CD8-positive, alpha-beta T cell (primary cell): ENCODE measurements at regions of chr2 and their contacts with region 1.

Region 1: GRCh38 chr2:118882709-118883210 is 35.3 kb upstream of the EN1 start:
- DNase-seq: peak; percentile 40 to 84 (median 59)
- ATAC-seq: peak; percentile 81
- H3K4me3 ChIP-seq: peak overlapping the region; percentile 16 to 36
- H3K4me3 Mint-ChIP-seq: peak overlapping the region; percentile 75
- H3K27ac ChIP-seq: no peak overlapping the region
- H3K27ac Mint-ChIP-seq: peak overlapping the region; percentile 58
- H3K4me1 ChIP-seq: peaks cover 15% of the 10 kb centered on the region
- H3K4me1 Mint-ChIP-seq: peaks cover 22% of the 10 kb centered on the region
- H3K27me3 ChIP-seq: no peaks in the 10 kb centered on the region
- H3K27me3 Mint-ChIP-seq: peaks cover 5% of the 10 kb centered on the region
- CTCF ChIP-seq: peak; percentile 72

Region 2: GRCh38 chr2:118696786-118697465 is 185.8 kb before region 1 on chr2:
- CTCF ChIA-PET with region 1: no interaction called
- POLR2A ChIA-PET with region 1: no interaction called
- intact Hi-C with region 1: no loop called
- DNase-seq: no peak
- ATAC-seq: no peak
- H3K4me3 ChIP-seq: no peak overlapping the region
- H3K4me3 Mint-ChIP-seq: no peak overlapping the region
- H3K27ac ChIP-seq: no peak overlapping the region
- H3K27ac Mint-ChIP-seq: no peak overlapping the region
- H3K4me1 ChIP-seq: no peaks in the 10 kb centered on the region
- H3K4me1 Mint-ChIP-seq: no peaks in the 10 kb centered on the region
- H3K27me3 ChIP-seq: no peaks in the 10 kb centered on the region
- H3K27me3 Mint-ChIP-seq: peaks cover 3% of the 10 kb centered on the region
- CTCF ChIP-seq: no peak

Region 3: DNA sequence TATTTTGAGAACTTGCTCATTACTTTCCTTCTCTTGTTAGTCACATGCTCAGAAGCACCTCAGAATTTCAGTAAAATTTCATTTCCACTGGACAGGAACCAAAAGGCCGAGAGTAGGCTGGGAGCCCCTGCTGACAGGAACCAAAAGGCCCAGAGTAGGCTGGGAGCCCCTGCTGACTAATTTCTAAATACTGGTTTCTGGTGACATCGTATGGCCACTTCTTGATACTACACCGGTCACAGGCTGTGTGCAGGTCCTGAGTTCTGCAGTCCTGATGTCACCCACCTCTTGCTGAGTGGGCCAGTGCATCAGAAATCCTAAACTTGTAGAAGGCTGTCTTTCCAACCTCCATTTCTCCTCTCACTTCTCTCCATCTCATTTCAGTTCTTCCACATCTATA is 17.7 kb before region 1 on chr2:
- CTCF ChIA-PET with region 1: interaction called, 22 read pairs
- POLR2A ChIA-PET with region 1: no interaction called
- intact Hi-C with region 1: no loop called
- DNase-seq: peak in 2 of 9 experiments; percentile 45 to 55
- ATAC-seq: peak; percentile 55
- H3K4me3 ChIP-seq: no peak overlapping the region
- H3K4me3 Mint-ChIP-seq: no peak overlapping the region
- H3K27ac ChIP-seq: no peak overlapping the region
- H3K27ac Mint-ChIP-seq: no peak overlapping the region
- H3K4me1 ChIP-seq: no peaks in the 10 kb centered on the region
- H3K4me1 Mint-ChIP-seq: no peaks in the 10 kb centered on the region
- H3K27me3 ChIP-seq: peaks cover 0 to under 1% of the 10 kb centered on the region in 2 experiments
- H3K27me3 Mint-ChIP-seq: peaks cover 34% of the 10 kb centered on the region
- CTCF ChIP-seq: peak; percentile 31

Region 4: DNA sequence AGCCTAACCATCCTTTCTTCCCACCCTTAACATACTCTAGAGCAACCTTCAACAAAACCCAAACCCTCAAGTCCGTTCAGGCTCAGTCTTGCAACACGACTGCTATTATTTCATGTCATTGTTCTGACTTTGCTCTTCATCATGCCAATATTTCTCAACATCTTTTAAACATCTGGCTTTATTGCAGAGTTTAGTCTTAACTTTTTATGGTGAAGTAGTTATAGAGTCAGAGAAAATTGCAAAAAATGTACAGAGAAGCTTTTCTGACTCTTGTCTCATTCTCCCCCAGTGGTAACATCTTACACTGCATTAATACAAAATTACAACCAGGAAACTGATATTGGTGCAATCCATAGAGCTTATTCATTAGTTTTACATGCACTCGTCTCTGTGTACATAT is 63.1 kb after region 1 on chr2:
- CTCF ChIA-PET with region 1: interaction called, 10 read pairs
- POLR2A ChIA-PET with region 1: no interaction called
- intact Hi-C with region 1: loop called in 1 of 2 experiments (anchors 2 kb)
- DNase-seq: no peak
- ATAC-seq: no peak
- H3K4me3 ChIP-seq: no peak overlapping the region
- H3K4me3 Mint-ChIP-seq: no peak overlapping the region
- H3K27ac ChIP-seq: no peak overlapping the region
- H3K27ac Mint-ChIP-seq: no peak overlapping the region
- H3K4me1 ChIP-seq: no peaks in the 10 kb centered on the region
- H3K4me1 Mint-ChIP-seq: peaks cover 1% of the 10 kb centered on the region
- H3K27me3 ChIP-seq: no peaks in the 10 kb centered on the region
- H3K27me3 Mint-ChIP-seq: peaks cover 11% of the 10 kb centered on the region
- CTCF ChIP-seq: no peak

Region 5: DNA sequence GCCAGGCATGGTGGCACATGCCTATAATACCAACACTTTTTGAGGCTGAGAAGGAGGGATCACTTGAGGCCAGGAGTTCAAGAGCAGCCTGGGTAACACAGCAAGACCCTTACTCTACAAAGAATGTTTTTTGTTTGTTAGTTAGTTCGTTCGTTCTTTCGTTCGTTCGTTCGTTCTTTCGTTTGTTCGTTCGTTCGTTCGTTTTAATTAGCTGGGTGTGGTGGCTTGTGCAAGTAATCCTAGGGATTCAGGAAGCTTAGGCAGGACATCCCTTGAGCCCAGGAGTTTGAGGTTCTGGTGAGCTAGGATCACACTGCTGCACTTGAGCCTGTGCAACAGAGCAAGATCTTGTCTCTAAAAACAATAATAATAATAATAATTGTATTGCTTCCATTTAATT is 158.0 kb after region 1 on chr2:
- CTCF ChIA-PET with region 1: no interaction called
- POLR2A ChIA-PET with region 1: no interaction called
- intact Hi-C with region 1: loop called in 1 of 2 experiments (anchors 5 kb)
- DNase-seq: no peak
- ATAC-seq: no peak
- H3K4me3 ChIP-seq: no peak overlapping the region
- H3K4me3 Mint-ChIP-seq: no peak overlapping the region
- H3K27ac ChIP-seq: no peak overlapping the region
- H3K27ac Mint-ChIP-seq: no peak overlapping the region
- H3K4me1 ChIP-seq: no peaks in the 10 kb centered on the region
- H3K4me1 Mint-ChIP-seq: no peaks in the 10 kb centered on the region
- H3K27me3 ChIP-seq: no peaks in the 10 kb centered on the region
- H3K27me3 Mint-ChIP-seq: peaks cover 3% of the 10 kb centered on the region
- CTCF ChIP-seq: no peak

Region 6: DNA sequence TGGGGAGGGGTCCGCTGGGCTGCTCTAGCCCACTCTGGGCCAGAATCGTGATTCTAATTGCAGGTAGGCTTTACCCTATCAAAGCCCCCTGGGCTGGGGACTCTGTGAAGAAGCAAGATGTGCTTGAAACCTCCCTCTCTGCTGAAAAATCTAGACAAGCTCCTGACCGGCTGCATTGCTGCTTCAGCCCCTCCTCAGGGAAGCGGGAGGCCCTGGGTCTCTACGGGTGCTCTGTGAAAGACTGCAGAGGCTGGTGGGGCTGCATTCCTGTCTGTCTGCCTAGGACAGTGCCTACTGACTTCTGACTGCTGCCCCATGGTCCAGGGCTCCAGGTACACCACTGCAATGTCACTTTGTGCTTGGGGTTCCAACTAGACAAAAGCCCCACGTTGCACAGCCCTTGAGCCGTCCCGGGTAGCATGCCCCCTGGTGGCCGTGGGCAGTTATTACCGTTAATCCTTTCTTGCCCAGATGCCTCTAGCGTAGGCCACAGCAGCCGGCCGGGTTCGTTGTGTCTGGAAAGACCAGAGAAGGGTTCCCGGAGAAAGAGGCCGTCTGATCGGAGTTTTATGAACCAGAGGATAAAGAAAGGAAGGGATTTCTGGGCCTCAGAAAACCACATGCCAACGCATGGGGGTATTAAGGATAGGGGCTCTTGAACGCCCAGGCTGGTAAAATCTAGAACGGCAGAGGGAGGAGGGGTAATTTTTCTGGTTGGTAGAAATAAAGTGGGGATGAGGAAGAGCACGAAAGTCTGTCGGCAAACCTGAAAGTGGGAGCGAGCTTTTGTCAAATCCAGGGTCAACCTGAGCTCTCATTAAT is 291.7 kb after region 1 on chr2:
- CTCF ChIA-PET with region 1: interaction called, 66 read pairs
- POLR2A ChIA-PET with region 1: no interaction called
- intact Hi-C with region 1: loop called in 1 of 2 experiments (anchors 1 kb)
- DNase-seq: peak; percentile 25 to 76 (median 50)
- ATAC-seq: no peak
- H3K4me3 ChIP-seq: no peak overlapping the region
- H3K4me3 Mint-ChIP-seq: no peak overlapping the region
- H3K27ac ChIP-seq: no peak overlapping the region
- H3K27ac Mint-ChIP-seq: no peak overlapping the region
- H3K4me1 ChIP-seq: no peaks in the 10 kb centered on the region
- H3K4me1 Mint-ChIP-seq: no peaks in the 10 kb centered on the region
- H3K27me3 ChIP-seq: no peaks in the 10 kb centered on the region
- H3K27me3 Mint-ChIP-seq: no peaks in the 10 kb centered on the region
- CTCF ChIP-seq: peak; percentile 73

Region 7: GRCh38 chr2:119366649-119367471 is 484.1 kb after region 1 on chr2 and contains the starts of genes C2orf76 and DBI:
- CTCF ChIA-PET with region 1: no interaction called
- POLR2A ChIA-PET with region 1: no interaction called
- intact Hi-C with region 1: loop called in 1 of 2 experiments (anchors 5 kb)
- DNase-seq: peak; percentile 81 to 97 (median 90)
- ATAC-seq: peak; percentile 91
- H3K4me3 ChIP-seq: peak within 1 kb of the TSS; percentile 66 to 96
- H3K4me3 Mint-ChIP-seq: peak within 1 kb of the TSS; percentile 97
- H3K27ac ChIP-seq: peak within 1 kb of the TSS; percentile 68 to 92
- H3K27ac Mint-ChIP-seq: peak within 1 kb of the TSS; percentile 96
- H3K4me1 ChIP-seq: peaks cover 19% of the 10 kb centered on the region
- H3K4me1 Mint-ChIP-seq: peaks cover 61% of the 10 kb centered on the region
- H3K27me3 ChIP-seq: no peaks in the 10 kb centered on the region
- H3K27me3 Mint-ChIP-seq: no peaks in the 10 kb centered on the region
- CTCF ChIP-seq: no peak
- total RNA-seq, gene C2orf76: 5.2 to 5.8 TPM
- total RNA-seq, gene DBI: 33.9 to 35.6 TPM

Region 8: GRCh38 chr2:119659601-119660342 is 777.0 kb after region 1 on chr2:
- CTCF ChIA-PET with region 1: no interaction called
- POLR2A ChIA-PET with region 1: no interaction called
- intact Hi-C with region 1: loop called (anchors 5 kb)
- DNase-seq: peak in 4 of 9 experiments; percentile 37 to 60 (median 45)
- ATAC-seq: no peak
- H3K4me3 ChIP-seq: no peak overlapping the region
- H3K4me3 Mint-ChIP-seq: no peak overlapping the region
- H3K27ac ChIP-seq: no peak overlapping the region
- H3K27ac Mint-ChIP-seq: no peak overlapping the region
- H3K4me1 ChIP-seq: no peaks in the 10 kb centered on the region
- H3K4me1 Mint-ChIP-seq: peaks cover 2% of the 10 kb centered on the region
- H3K27me3 ChIP-seq: no peaks in the 10 kb centered on the region
- H3K27me3 Mint-ChIP-seq: peaks cover 7% of the 10 kb centered on the region
- CTCF ChIP-seq: peak; percentile 76